ENCODE measurements at regions of chr4 and their contacts with region 1.

Region 1: DNA sequence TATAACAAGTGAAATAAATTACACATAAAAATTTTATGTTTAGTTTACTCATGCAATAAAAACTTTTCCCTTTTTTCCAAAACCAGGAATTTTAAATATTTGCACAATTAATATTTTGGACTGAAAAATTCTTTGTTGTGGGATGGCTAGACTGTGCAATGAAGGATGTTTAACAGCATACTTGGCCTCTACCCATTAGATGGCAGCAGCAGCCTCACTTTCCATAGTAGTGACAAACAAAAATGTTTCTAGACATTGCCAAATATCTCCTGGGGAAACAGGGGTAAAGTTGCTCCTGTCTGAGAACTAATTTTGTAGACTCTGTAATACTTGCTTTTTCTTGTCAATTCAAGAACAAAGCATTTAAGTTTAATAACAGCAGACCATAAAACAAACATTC is 49.8 kb downstream of the SCLT1 start:
- DNase-seq: peak in 1 of 4 experiments; percentile 5
- ATAC-seq: peak; percentile 67; the same call in 2 of the 3 replicates
- H3K4me3 ChIP-seq: no peak overlapping the region
- H3K27ac ChIP-seq: no peak overlapping the region
- H3K4me1 ChIP-seq: no peaks in the 10 kb centered on the region
- H3K27me3 ChIP-seq: no peaks in the 10 kb centered on the region
- CTCF ChIP-seq: peak in 1 of 3 experiments; percentile 42; a peak in 2 of 6 replicates
- EP300 ChIP-seq: no peak
- POLR2A ChIP-seq: no peak
- RAD21 ChIP-seq: peak in 1 of 2 experiments; percentile 32; a peak in 1 of 4 replicates

Region 2: GRCh38 chr4:129140521-129140920 is 97.0 kb after region 1 on chr4:
- CTCF ChIA-PET with region 1: no interaction called
- POLR2A ChIA-PET with region 1: no interaction called
- in situ Hi-C with region 1: no loop called
- intact Hi-C with region 1: loop called (anchors 10 kb)
- DNase-seq: no peak
- ATAC-seq: no peak
- H3K4me3 ChIP-seq: no peak overlapping the region
- H3K27ac ChIP-seq: no peak overlapping the region
- H3K4me1 ChIP-seq: peaks cover 0 to 4% of the 10 kb centered on the region in 2 experiments; a peak in 2 of 5 replicates
- H3K27me3 ChIP-seq: peaks cover 0 to 15% of the 10 kb centered on the region in 2 experiments; a peak in 4 of 5 replicates
- CTCF ChIP-seq: peak in 1 of 3 experiments; percentile 40; a peak in 1 of 6 replicates
- EP300 ChIP-seq: no peak
- POLR2A ChIP-seq: no peak
- RAD21 ChIP-seq: peak; percentile 20 to 25; a peak in 2 of 4 replicates

Region 3: GRCh38 chr4:129167640-129168260 is 124.2 kb after region 1 on chr4:
- CTCF ChIA-PET with region 1: no interaction called
- POLR2A ChIA-PET with region 1: no interaction called
- in situ Hi-C with region 1: no loop called
- intact Hi-C with region 1: loop called (anchors 1 kb)
- DNase-seq: peak in 2 of 4 experiments; percentile 8 to 40
- ATAC-seq: peak; percentile 97
- H3K4me3 ChIP-seq: no peak overlapping the region
- H3K27ac ChIP-seq: no peak overlapping the region
- H3K4me1 ChIP-seq: no peaks in the 10 kb centered on the region
- H3K27me3 ChIP-seq: no peaks in the 10 kb centered on the region
- CTCF ChIP-seq: peak; percentile 49 to 65 (median 52); a peak in 5 of 6 replicates
- EP300 ChIP-seq: no peak
- POLR2A ChIP-seq: no peak
- RAD21 ChIP-seq: peak; percentile 24 to 57; a peak in 3 of 4 replicates

Region 4: GRCh38 chr4:129246850-129247562 is 203.5 kb after region 1 on chr4:
- CTCF ChIA-PET with region 1: no interaction called
- POLR2A ChIA-PET with region 1: no interaction called
- in situ Hi-C with region 1: no loop called
- intact Hi-C with region 1: no loop called
- DNase-seq: no peak
- ATAC-seq: no peak
- H3K4me3 ChIP-seq: no peak overlapping the region
- H3K27ac ChIP-seq: no peak overlapping the region
- H3K4me1 ChIP-seq: no peaks in the 10 kb centered on the region
- H3K27me3 ChIP-seq: peaks cover 0 to 5% of the 10 kb centered on the region in 2 experiments; a peak in 2 of 5 replicates
- CTCF ChIP-seq: no peak
- EP300 ChIP-seq: no peak
- POLR2A ChIP-seq: no peak
- RAD21 ChIP-seq: no peak

Measured in K562 (cell line).